Activated CD8-positive, alpha-beta memory T cell treated with anti-CD3 and anti-CD28 coated beads, Interleukin-2, amount 10 ng/mL, durations not matched to agents 7 days and 5 days (primary cell): ENCODE measurements at regions of chr11 and their contacts with region 1.

Region 1: DNA sequence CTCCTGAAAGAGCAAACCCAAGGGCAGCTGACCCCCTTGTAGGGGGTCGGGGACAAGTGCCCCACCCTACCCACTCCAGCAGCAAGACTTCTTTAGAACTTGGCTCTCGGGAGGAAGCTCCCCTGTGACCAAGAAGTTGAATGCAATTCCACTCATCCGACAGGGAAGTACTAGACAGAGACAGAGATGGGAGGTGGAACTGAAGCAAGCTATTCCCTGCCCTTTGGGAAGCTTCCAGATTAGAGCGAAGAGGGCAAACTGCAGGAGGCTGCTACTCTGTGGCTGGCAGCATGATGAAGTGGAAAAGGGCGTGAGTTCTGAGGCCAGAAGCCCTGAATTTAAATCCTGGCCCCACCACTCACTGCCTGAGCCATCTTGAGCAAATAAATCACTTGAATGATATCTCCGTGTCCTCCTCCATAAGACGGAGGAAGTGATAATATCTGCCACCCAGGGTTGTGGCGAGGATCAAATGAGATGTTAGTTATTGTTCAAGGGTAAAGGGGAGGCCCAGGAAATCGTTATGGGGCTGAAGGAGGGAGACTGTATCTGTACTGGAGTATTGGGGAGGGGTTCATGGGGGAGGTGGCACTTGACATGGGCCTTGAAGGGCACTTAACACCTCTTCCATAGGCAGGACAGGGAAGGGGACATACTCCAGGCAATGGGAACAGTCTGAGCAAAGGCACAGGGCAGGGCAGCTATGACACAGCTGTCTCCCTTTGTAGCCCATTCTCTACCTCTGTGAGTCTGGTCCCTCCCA is 16.2 kb upstream of the DGKZ start:
- DNase-seq: peak; percentile 55
- ATAC-seq: peak; percentile 37
- H3K4me3 Mint-ChIP-seq: no peak overlapping the region
- H3K27ac Mint-ChIP-seq: no peak overlapping the region
- H3K4me1 Mint-ChIP-seq: peaks cover 23% of the 10 kb centered on the region
- H3K27me3 Mint-ChIP-seq: peaks cover 66% of the 10 kb centered on the region

Region 2: GRCh38 chr11:46229230-46229629 is 101.8 kb before region 1 on chr11:
- CTCF ChIA-PET with region 1: no interaction called
- DNase-seq: no peak
- ATAC-seq: no peak
- H3K4me3 Mint-ChIP-seq: no peak overlapping the region
- H3K27ac Mint-ChIP-seq: no peak overlapping the region
- H3K4me1 Mint-ChIP-seq: peaks cover 2% of the 10 kb centered on the region
- H3K27me3 Mint-ChIP-seq: peaks cover 54% of the 10 kb centered on the region

Region 3: DNA sequence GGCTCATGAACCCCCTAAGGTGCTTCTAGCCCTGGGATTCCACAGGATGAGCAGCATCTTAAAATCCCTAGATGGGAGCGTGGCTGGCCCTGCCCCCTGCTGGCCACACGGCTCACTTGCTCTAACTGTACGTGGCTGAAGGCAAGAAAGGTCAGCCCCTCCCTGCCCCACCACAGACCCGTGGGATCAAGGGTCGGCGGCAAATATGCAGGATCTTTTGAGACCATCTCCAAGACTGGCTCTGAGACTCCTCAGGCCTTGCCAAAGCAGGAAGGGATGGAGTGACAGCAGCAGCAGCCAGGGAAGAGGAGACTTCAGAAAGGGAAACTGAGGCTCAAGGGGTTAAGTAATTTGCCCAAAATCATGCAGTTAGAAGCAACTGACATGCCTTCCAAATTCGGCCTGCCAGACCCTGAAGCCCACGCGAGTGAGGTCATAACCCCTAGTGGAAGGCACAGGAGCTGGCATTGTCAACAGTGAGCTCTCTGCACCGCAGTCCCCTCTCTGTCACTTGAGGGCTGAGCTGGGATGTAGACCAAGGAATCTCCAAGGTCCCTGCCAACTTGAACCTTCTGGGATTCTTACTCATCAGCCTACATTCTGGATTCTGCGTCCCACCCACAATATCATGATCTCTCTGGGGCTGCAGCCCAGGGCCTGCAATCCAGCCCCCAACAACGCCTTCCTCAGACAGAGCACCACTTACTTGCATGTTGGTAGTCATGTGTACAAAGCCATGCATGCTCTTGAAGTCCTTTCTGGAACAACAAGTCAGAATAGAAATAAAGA is 22.2 kb before region 1 on chr11:
- CTCF ChIA-PET with region 1: interaction called, 26 read pairs
- DNase-seq: peak; percentile 80
- ATAC-seq: peak; percentile 85
- H3K4me3 Mint-ChIP-seq: no peak overlapping the region
- H3K27ac Mint-ChIP-seq: no peak overlapping the region
- H3K4me1 Mint-ChIP-seq: peaks cover 9% of the 10 kb centered on the region
- H3K27me3 Mint-ChIP-seq: peaks cover 5% of the 10 kb centered on the region

Region 4: DNA sequence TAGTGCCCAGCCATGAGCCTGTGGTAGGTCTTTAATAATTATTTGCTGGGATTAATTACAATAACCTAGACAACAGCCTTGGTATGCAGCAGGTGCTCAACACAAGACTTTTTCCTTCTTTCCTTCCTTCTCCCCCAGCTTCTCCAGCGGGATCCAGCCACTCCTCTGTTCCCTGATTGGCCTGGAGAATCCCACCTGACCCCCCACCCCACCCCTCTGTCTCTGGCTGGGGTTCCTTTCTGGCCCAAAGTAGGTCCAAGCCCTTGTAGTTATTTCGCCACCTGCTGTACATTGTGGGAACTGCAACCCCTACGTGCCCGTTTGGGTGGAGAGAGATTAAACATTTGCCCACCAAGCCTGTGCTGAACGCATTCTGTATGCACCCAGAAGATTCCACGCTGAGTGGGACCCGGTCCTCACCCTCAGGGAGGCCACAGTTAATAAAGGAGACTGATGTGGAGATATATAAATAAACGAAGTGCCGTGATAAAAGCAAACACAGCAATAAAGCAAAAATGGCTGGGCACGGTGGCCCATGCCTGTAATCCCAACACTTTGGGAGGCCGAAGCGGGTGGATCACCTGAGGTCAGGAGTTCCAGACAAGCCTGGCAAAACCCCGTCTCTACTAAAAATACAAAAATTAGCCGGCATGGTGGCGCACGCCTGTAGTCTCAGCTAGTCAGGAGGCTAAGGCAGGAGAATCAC is 15.9 kb before region 1 on chr11:
- CTCF ChIA-PET with region 1: interaction called, 26 read pairs
- DNase-seq: peak; percentile 82
- ATAC-seq: peak; percentile 73
- H3K4me3 Mint-ChIP-seq: no peak overlapping the region
- H3K27ac Mint-ChIP-seq: no peak overlapping the region
- H3K4me1 Mint-ChIP-seq: peaks cover 21% of the 10 kb centered on the region
- H3K27me3 Mint-ChIP-seq: peaks cover 2% of the 10 kb centered on the region

Region 5: DNA sequence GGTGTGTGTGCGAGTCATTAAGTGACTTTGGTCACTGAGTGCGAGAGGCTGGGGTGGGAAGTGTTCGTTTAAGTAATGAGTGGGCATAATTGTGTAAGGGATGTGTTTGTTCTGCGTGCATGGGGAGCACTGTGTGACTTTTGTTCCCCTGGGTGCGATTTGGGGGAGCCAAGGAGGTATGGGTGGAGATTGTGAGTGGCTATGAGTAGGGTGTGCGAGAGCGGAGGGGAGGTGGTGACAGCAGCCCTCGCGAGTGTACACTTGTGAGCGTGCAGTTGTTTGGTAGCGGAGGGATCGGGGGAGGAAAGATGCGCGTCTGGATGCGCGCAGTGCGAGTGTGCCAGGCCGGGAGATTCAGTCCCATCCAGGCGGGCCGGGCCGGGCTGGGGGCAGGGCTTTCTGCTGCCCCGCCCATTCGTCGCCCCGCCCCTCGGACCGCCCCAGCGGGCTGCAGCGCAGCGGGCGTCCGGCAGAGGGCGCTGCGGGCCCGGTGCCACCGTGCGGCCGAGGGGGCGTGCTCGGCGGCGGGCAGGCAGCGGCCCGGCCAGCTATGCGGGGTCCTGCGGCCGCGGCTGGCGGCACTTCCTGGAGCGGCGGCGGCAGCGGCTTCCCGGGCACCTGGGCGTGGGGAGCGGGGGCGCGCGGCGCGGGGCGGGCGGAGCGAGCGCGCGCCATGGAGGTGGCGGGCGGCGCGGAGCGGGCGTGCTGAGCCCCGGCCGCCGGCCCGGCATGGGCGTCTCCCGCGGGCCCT is 16.0 kb after region 1 on chr11 and contains the start of gene DGKZ:
- CTCF ChIA-PET with region 1: interaction called, 10 read pairs
- DNase-seq: peak; percentile 88
- ATAC-seq: peak; percentile 75
- H3K4me3 Mint-ChIP-seq: peak within 1 kb of the TSS; percentile 89
- H3K27ac Mint-ChIP-seq: peak within 1 kb of the TSS; percentile 94
- H3K4me1 Mint-ChIP-seq: peaks cover 66% of the 10 kb centered on the region
- H3K27me3 Mint-ChIP-seq: peaks cover 21% of the 10 kb centered on the region
- total RNA-seq, gene DGKZ: 96.9 to 132 TPM